H1 (cell line): ENCODE measurements at regions of chr3 and their contacts with region 1.

Region 1: GRCh38 chr3:132399054-132399929 is 18.0 kb upstream of the DNAJC13 start:
- DNase-seq: no peak
- H3K4me3 ChIP-seq: no peak overlapping the region
- H3K27ac ChIP-seq: no peak overlapping the region
- H3K4me1 ChIP-seq: 0 out of 7 replicates have a peak, but pooled peaks cover 0 to 5% (median 0%) of the 10 kb centered on the region in 4 experiments
- H3K27me3 ChIP-seq: no peaks in the 10 kb centered on the region
- CTCF ChIP-seq: peak in 2 of 3 experiments; percentile 86 to 89; a peak in 3 of 4 replicates
- EP300 ChIP-seq: peak in 1 of 2 experiments; percentile 12; a peak in 1 of 3 replicates
- POLR2A ChIP-seq: no peak
- RAD21 ChIP-seq: peak; percentile 98 to 99

Region 2: DNA sequence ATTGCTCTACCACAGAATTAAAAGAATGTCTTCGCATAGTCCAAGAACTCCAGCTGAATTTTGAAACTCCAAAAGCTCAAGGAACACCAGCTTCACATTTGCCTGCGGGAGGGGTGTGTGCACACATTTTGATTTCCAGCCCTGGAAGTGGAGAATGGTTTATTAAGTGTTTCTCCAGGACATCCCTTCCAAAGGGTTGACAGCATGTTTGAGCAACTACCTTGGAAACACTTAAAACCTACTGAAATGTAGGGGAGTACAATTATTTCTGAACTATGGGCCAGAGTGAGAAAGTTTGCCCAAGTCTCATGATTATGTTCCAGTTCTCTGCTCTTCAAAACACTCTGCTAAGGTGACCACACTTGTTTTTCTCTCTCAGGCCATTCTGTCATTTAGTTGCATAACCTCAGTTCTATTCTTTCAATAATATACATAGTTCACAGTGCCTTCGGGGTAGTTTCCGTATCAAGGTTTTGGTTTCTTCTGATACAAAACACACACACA is 74.1 kb before region 1 on chr3:
- CTCF ChIA-PET with region 1: interaction called, 11 read pairs
- POLR2A ChIA-PET with region 1: no interaction called
- DNase-seq: no peak
- H3K4me3 ChIP-seq: no peak overlapping the region
- H3K27ac ChIP-seq: no peak overlapping the region
- H3K4me1 ChIP-seq: no peaks in the 10 kb centered on the region
- H3K27me3 ChIP-seq: no peaks in the 10 kb centered on the region
- CTCF ChIP-seq: no peak
- EP300 ChIP-seq: no peak
- POLR2A ChIP-seq: no peak
- RAD21 ChIP-seq: no peak

Region 3: DNA sequence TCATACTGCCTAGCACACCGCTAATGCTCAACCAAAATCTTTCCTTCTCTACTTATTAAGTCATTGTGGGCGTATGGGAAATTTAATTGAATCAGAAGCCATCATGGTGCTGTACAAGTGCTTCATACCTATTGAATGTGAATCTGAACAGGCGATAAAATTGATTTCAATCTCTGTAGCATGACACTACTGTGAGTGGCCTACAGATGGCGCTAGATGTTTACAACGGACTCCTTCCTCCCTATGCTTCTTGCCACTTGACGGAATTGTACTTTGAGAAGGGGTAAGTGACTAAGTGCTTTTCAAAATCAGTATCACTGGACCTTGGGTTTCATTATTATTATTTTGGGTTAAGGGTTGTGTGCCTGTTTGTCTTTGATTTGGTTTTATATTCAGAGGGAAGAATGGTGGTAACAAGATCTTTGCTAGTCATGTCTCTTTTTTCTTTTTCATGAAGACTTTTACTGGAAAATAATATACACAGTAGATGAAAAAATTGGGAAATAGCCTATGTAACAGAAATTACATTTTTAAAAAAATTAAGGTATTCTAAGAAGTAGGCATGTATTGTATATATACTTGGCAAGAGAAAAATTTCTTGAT is 46.6 kb before region 1 on chr3:
- CTCF ChIA-PET with region 1: interaction called, 486 read pairs
- POLR2A ChIA-PET with region 1: interaction called, 32 read pairs
- DNase-seq: peak in 1 of 2 experiments; percentile 76
- H3K4me3 ChIP-seq: no peak overlapping the region
- H3K27ac ChIP-seq: no peak overlapping the region
- H3K4me1 ChIP-seq: peaks cover 0 to 16% (median 8%) of the 10 kb centered on the region in 4 experiments; a peak in 3 of 7 replicates
- H3K27me3 ChIP-seq: no peaks in the 10 kb centered on the region
- CTCF ChIP-seq: peak in 2 of 3 experiments; percentile 80 to 93; a peak in 3 of 4 replicates
- EP300 ChIP-seq: no peak
- POLR2A ChIP-seq: no peak
- RAD21 ChIP-seq: peak; percentile 95 to 97

Region 4: GRCh38 chr3:132368962-132369361 is 30.3 kb before region 1 on chr3:
- CTCF ChIA-PET with region 1: interaction called, 45 read pairs
- POLR2A ChIA-PET with region 1: no interaction called
- DNase-seq: no peak
- H3K4me3 ChIP-seq: no peak overlapping the region
- H3K27ac ChIP-seq: no peak overlapping the region
- H3K4me1 ChIP-seq: no peaks in the 10 kb centered on the region
- H3K27me3 ChIP-seq: no peaks in the 10 kb centered on the region
- CTCF ChIP-seq: no peak
- EP300 ChIP-seq: no peak
- POLR2A ChIP-seq: no peak
- RAD21 ChIP-seq: no peak

Region 5: GRCh38 chr3:132380920-132381319 is 18.4 kb before region 1 on chr3:
- CTCF ChIA-PET with region 1: interaction called, 27 read pairs
- POLR2A ChIA-PET with region 1: interaction called, 26 read pairs
- DNase-seq: no peak
- H3K4me3 ChIP-seq: no peak overlapping the region
- H3K27ac ChIP-seq: peak overlapping the region; percentile 82; the same call in 1 of the 2 replicates
- H3K4me1 ChIP-seq: peaks cover 18 to 25% (median 21%) of the 10 kb centered on the region in 4 experiments
- H3K27me3 ChIP-seq: no peaks in the 10 kb centered on the region
- CTCF ChIP-seq: no peak
- EP300 ChIP-seq: no peak
- POLR2A ChIP-seq: no peak
- RAD21 ChIP-seq: no peak